ENCODE measurements at regions of chr10 and their contacts with region 1.

Region 1: GRCh38 chr10:69974551-69975155 is 78.0 kb upstream of the MACROH2A2 start:
- DNase-seq: peak; percentile 81
- H3K4me3 ChIP-seq: no peak overlapping the region
- H3K27ac ChIP-seq: peak overlapping the region; percentile 73
- H3K4me1 ChIP-seq: peaks cover 49% of the 10 kb centered on the region
- H3K27me3 ChIP-seq: no peaks in the 10 kb centered on the region
- CTCF ChIP-seq: no peak

Region 2: GRCh38 chr10:70034232-70034631 is 59.6 kb after region 1 on chr10:
- CTCF ChIA-PET with region 1: no interaction called
- POLR2A ChIA-PET with region 1: no interaction called
- intact Hi-C with region 1: loop called (anchors 2 kb)
- DNase-seq: peak; percentile 97
- H3K4me3 ChIP-seq: no peak overlapping the region
- H3K27ac ChIP-seq: peak overlapping the region; percentile 71
- H3K4me1 ChIP-seq: peaks cover 36% of the 10 kb centered on the region
- H3K27me3 ChIP-seq: no peaks in the 10 kb centered on the region
- CTCF ChIP-seq: no peak

Region 3: DNA sequence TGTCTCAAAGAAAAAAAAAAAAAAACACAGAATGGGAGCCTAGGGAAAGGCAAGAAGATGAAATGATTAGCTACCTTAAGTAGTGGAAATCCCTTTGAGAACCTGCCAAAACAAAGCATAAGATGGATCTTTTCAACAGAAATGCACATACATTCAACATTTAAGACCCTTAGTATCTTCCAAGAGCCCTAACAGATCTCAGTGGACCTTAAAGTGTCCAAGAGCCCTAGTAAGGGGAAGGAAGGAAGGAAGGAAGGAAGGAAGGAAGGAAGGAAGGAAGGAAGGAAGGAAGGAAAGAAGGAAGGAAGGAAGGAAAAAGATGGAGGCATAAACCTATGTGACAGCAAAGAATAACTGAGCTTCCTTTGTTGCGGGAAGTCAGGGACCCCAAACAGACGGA is 66.4 kb after region 1 on chr10:
- CTCF ChIA-PET with region 1: no interaction called
- POLR2A ChIA-PET with region 1: interaction called, 3 read pairs
- intact Hi-C with region 1: loop called (anchors 2 kb)
- DNase-seq: peak; percentile 95
- H3K4me3 ChIP-seq: no peak overlapping the region
- H3K27ac ChIP-seq: peak overlapping the region; percentile 98
- H3K4me1 ChIP-seq: peaks cover 24% of the 10 kb centered on the region
- H3K27me3 ChIP-seq: no peaks in the 10 kb centered on the region
- CTCF ChIP-seq: no peak

Region 4: GRCh38 chr10:70052462-70053217 is 78.0 kb after region 1 on chr10 and contains the start of gene MACROH2A2:
- CTCF ChIA-PET with region 1: no interaction called
- POLR2A ChIA-PET with region 1: interaction called, 3 read pairs
- intact Hi-C with region 1: loop called (anchors 5 kb)
- DNase-seq: peak; percentile 93
- H3K4me3 ChIP-seq: peak within 1 kb of the TSS; percentile 87
- H3K27ac ChIP-seq: peak within 1 kb of the TSS; percentile 100
- H3K4me1 ChIP-seq: peaks cover 78% of the 10 kb centered on the region
- H3K27me3 ChIP-seq: no peaks in the 10 kb centered on the region
- CTCF ChIP-seq: peak; percentile 56
- total RNA-seq, gene MACROH2A2: 301 and 326 TPM in 2 replicates